Activated CD8-positive, alpha-beta T cell treated with anti-CD3 and anti-CD28 coated beads, Interleukin-2, amount 10 ng/mL, durations not matched to agents 7 days and 5 days (primary cell): ENCODE measurements at regions of chr15 and their contacts with region 1.

Region 1: GRCh38 chr15:85475317-85475701 is 94.9 kb downstream of the AKAP13 start:
- DNase-seq: no peak
- ATAC-seq: no peak
- H3K4me3 Mint-ChIP-seq: no peak overlapping the region
- H3K27ac Mint-ChIP-seq: no peak overlapping the region
- H3K4me1 Mint-ChIP-seq: peaks cover 31% of the 10 kb centered on the region
- H3K27me3 Mint-ChIP-seq: no peaks in the 10 kb centered on the region

Region 2: GRCh38 chr15:85485956-85486567 is 10.8 kb after region 1 on chr15:
- CTCF ChIA-PET with region 1: interaction called, 19 read pairs
- POLR2A ChIA-PET with region 1: no interaction called
- DNase-seq: peak; percentile 79
- ATAC-seq: peak; percentile 83
- H3K4me3 Mint-ChIP-seq: no peak overlapping the region
- H3K27ac Mint-ChIP-seq: no peak overlapping the region
- H3K4me1 Mint-ChIP-seq: peaks cover 46% of the 10 kb centered on the region
- H3K27me3 Mint-ChIP-seq: no peaks in the 10 kb centered on the region

Region 3: GRCh38 chr15:85497172-85497569 is 21.9 kb after region 1 on chr15:
- CTCF ChIA-PET with region 1: no interaction called
- POLR2A ChIA-PET with region 1: no interaction called
- DNase-seq: no peak
- ATAC-seq: no peak
- H3K4me3 Mint-ChIP-seq: no peak overlapping the region
- H3K27ac Mint-ChIP-seq: no peak overlapping the region
- H3K4me1 Mint-ChIP-seq: peaks cover 3% of the 10 kb centered on the region
- H3K27me3 Mint-ChIP-seq: no peaks in the 10 kb centered on the region

Region 4: GRCh38 chr15:85592148-85592547 is 116.8 kb after region 1 on chr15:
- CTCF ChIA-PET with region 1: no interaction called
- POLR2A ChIA-PET with region 1: no interaction called
- DNase-seq: no peak
- ATAC-seq: no peak
- H3K4me3 Mint-ChIP-seq: no peak overlapping the region
- H3K27ac Mint-ChIP-seq: no peak overlapping the region
- H3K4me1 Mint-ChIP-seq: peaks cover 24% of the 10 kb centered on the region
- H3K27me3 Mint-ChIP-seq: no peaks in the 10 kb centered on the region